Activated naive CD4-positive, alpha-beta T cell treated with anti-CD3 and anti-CD28 coated beads for 36 hours (primary cell): ENCODE measurements at regions of chr4 and their contacts with region 1.

Region 1: GRCh38 chr4:75514131-75514948 is at the starts of genes RCHY1 and THAP6:
- DNase-seq: peak; percentile 94
- H3K4me3 Mint-ChIP-seq: no peak within 1 kb of the TSS
- H3K27ac Mint-ChIP-seq: peak within 1 kb of the TSS; percentile 98
- H3K4me1 Mint-ChIP-seq: peaks cover 39% of the 10 kb centered on the region
- H3K27me3 Mint-ChIP-seq: no peaks in the 10 kb centered on the region
- total RNA-seq, gene RCHY1: 31.3 to 34.6 TPM
- total RNA-seq, gene THAP6: 14.3 to 15.4 TPM

Region 2: DNA sequence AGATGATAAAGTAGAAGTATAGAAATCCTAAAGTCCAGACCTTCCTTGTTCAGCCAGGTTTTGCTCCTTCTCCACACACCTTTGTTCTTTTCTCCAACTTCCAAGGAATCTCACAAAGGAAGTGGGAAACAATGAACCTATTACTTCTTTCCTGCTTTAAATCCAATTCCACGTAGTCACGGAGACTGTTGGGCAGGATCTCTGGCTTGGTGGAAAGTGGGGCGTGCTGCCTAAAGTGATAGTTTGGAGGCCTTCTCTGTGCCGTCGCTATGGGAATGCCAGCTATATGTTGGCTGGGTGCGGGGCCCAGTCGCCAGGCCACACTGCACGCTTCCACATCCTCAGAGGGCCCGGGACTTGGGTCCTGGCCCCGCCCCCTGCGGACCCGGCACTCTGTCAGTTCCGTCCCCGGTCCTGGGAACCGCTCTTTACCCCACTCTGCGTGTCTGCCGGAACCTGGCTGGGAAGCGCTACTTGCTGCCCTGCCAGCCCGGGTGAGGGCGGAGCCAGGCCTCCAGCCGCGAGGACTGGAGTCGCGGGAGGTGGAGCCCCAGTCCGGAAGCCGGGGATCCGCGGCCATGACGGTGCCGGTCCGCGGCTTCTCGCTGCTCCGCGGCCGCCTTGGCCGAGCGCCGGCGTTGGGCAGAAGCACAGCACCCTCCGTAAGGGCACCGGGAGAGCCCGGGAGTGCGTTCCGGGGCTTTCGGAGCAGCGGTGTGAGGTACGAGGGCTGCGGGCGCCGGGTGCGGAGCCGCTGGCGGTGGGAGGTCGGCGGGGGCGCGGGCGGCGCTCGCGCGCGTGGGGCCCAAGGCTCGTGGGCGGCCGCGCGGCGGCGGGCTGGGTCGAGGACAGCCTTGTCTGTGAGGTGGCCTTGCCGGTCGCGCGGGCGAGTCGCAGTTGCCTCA is 1356.5 kb before region 1 on chr4 and contains the start of gene MTHFD2L:
- CTCF ChIA-PET with region 1: no interaction called
- intact Hi-C with region 1: loop called (anchors 5 kb)
- DNase-seq: peak; percentile 83
- H3K4me3 Mint-ChIP-seq: peak within 1 kb of the TSS; percentile 87
- H3K27ac Mint-ChIP-seq: peak within 1 kb of the TSS; percentile 83
- H3K4me1 Mint-ChIP-seq: peaks cover 23% of the 10 kb centered on the region
- H3K27me3 Mint-ChIP-seq: peaks cover 4% of the 10 kb centered on the region
- total RNA-seq, gene MTHFD2L: 4.8 to 5.3 TPM

Region 3: GRCh38 chr4:75630174-75630936 is 116.0 kb after region 1 on chr4 and contains the start of gene CDKL2:
- CTCF ChIA-PET with region 1: no interaction called
- intact Hi-C with region 1: loop called (anchors 1 kb)
- DNase-seq: peak; percentile 91
- H3K4me3 Mint-ChIP-seq: peak within 1 kb of the TSS; percentile 72
- H3K27ac Mint-ChIP-seq: no peak within 1 kb of the TSS
- H3K4me1 Mint-ChIP-seq: peaks cover 5% of the 10 kb centered on the region
- H3K27me3 Mint-ChIP-seq: no peaks in the 10 kb centered on the region
- total RNA-seq, gene CDKL2: 0.79 to 1.2 TPM

Region 4: GRCh38 chr4:75989846-75990528 is 475.6 kb after region 1 on chr4:
- CTCF ChIA-PET with region 1: no interaction called
- intact Hi-C with region 1: loop called (anchors 1 kb)
- DNase-seq: no peak
- H3K4me3 Mint-ChIP-seq: peak overlapping the region; percentile 85
- H3K27ac Mint-ChIP-seq: peak overlapping the region; percentile 72
- H3K4me1 Mint-ChIP-seq: peaks cover 27% of the 10 kb centered on the region
- H3K27me3 Mint-ChIP-seq: no peaks in the 10 kb centered on the region